Aorta (tissue), 5 donors: ENCODE measurements at regions of chr20 and their contacts with region 1.

Region 1: GRCh38 chr20:25623736-25624499 is at the start of gene NANP:
- DNase-seq: peak; percentile 98
- ATAC-seq: peak; percentile 97
- H3K4me3 ChIP-seq: peak within 1 kb of the TSS; percentile 81 to 82
- H3K27ac ChIP-seq: peak within 1 kb of the TSS in 1 of 2 donors; percentile 68
- H3K4me1 ChIP-seq: no peaks in the 10 kb centered on the region
- H3K27me3 ChIP-seq: no peaks in the 10 kb centered on the region
- total RNA-seq, gene NANP: 5.0 to 5.6 TPM

Region 2: DNA sequence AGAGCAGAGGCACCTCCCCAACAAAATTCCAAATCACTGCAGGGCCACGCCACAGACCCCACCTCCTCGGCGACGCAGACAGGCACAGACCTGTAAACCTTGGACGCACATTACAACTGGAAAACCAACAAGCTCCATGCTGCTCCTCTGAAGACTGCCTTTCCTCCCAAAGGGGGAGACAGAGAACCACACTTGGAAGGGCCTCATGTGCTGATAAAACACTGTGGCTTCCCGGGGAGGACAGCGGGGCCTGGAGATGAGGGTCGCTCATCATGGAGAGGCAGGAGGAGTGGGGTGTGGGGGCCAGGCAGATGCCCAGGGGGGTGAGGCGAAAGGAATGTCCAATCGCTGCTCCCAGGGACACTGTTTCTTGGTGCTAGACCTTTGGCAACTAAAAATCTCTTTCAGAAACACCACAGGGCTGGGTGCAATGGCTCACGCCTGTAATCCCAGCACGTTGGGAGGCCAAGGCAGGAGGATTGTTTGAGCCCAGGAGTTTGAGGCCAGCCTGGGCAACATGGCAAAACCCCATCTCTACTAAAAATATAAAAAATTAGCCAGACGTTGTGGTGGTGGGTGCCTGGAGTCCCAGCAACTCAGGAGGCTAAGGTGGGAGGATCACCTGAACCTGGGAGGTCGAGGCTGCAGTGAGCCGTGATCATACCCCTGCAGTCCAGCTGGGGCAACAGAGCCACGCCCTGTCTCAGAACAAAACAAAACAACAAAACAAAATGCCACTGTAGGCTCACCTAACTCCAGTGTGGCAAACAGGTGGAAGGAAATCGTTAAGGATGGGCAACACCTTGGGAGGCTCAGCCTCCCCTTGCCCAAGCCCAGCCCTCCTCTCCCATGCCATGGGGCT is 287.1 kb before region 1 on chr20:
- intact Hi-C with region 1: no loop called
- DNase-seq: no peak
- ATAC-seq: no peak
- H3K4me3 ChIP-seq: no peak overlapping the region
- H3K27ac ChIP-seq: no peak overlapping the region
- H3K4me1 ChIP-seq: no peaks in the 10 kb centered on the region
- H3K27me3 ChIP-seq: no peaks in the 10 kb centered on the region

Region 3: DNA sequence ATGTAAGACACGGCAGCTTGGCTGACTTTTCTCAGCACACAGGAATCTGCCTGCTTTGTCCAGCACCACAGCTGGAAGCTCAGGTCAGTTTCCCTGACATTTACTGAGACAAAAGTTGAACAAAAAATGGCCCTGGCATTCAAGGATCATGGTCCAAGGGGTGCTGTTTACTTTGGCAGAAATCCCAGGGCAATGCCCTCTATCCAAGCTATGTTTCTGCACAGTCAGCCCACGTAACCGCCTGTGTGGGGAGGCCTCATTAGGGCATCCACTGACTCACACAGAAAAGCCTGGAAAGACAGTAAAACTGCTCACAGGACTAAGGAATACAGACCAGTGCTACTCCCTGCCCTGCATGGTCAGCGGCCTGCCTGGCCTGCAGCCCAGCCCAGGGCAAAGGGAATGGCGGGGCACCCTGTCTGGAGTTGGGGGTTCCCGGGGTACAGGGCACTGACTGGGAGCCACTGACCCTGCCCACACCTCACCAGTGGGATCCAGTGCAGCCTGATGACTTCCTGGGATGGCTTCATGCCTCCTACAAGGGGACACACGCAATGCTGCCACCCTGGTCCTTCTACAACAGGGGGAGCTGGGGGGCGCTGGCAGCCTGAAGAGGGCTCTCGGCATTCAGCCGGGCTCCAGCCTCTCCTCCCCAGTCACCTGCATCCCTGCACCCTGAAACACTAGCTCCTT is 115.7 kb before region 1 on chr20:
- intact Hi-C with region 1: loop called in 1 of 2 experiments (anchors 5 kb)
- DNase-seq: peak in 1 of 2 donors; percentile 80
- ATAC-seq: peak; percentile 75
- H3K4me3 ChIP-seq: no peak overlapping the region
- H3K27ac ChIP-seq: peak overlapping the region in 1 of 2 donors; percentile 23
- H3K4me1 ChIP-seq: no peaks in the 10 kb centered on the region
- H3K27me3 ChIP-seq: no peaks in the 10 kb centered on the region

Region 4: DNA sequence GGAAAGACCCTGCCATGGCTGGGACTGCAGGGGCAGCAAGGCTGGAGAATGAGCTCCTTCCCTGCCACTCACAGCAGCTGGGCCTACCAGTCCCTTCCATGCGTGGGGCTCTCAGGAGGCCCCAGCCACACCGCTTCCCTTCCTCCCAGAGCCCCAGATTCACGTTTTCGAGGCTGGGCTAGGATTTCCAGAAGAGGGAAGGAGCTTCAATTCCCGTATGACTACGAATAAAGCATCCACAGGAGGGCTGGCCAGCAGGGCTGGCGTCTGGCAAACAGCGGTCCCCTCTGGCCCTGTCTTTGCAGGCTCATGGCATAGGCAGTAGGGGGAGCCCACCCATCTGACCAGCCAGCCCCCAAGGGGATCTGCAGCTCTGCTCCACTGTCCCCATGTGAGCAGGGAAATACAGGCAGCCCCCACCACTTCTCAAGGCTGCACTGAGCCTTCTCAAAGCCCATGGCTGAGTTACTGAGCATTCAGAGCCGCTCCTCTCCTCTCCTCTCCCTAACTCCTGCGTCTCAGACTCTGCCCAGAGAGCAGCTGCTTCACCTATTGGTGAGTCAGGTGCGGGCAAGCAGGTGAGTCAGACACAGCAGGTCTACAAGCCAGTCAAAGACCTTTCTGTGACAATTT is 91.7 kb before region 1 on chr20:
- intact Hi-C with region 1: loop called in 1 of 2 experiments (anchors 5 kb)
- DNase-seq: peak in 1 of 2 donors; percentile 61
- ATAC-seq: peak; percentile 80
- H3K4me3 ChIP-seq: peak overlapping the region; percentile 8 to 44
- H3K27ac ChIP-seq: peak overlapping the region; percentile 89 to 91
- H3K4me1 ChIP-seq: peaks cover 0 to 4% of the 10 kb centered on the region in 2 donors
- H3K27me3 ChIP-seq: no peaks in the 10 kb centered on the region

Region 5: GRCh38 chr20:25584905-25585704 is 38.8 kb before region 1 on chr20 and contains the start of gene NINL:
- intact Hi-C with region 1: loop called in 1 of 2 experiments (anchors 5 kb)
- DNase-seq: peak; percentile 74 to 90
- ATAC-seq: peak; percentile 88
- H3K4me3 ChIP-seq: peak within 1 kb of the TSS; percentile 62 to 71
- H3K27ac ChIP-seq: no peak within 1 kb of the TSS
- H3K4me1 ChIP-seq: no peaks in the 10 kb centered on the region
- H3K27me3 ChIP-seq: no peaks in the 10 kb centered on the region
- total RNA-seq, gene NINL: 9.1 to 16.7 TPM

Region 6: DNA sequence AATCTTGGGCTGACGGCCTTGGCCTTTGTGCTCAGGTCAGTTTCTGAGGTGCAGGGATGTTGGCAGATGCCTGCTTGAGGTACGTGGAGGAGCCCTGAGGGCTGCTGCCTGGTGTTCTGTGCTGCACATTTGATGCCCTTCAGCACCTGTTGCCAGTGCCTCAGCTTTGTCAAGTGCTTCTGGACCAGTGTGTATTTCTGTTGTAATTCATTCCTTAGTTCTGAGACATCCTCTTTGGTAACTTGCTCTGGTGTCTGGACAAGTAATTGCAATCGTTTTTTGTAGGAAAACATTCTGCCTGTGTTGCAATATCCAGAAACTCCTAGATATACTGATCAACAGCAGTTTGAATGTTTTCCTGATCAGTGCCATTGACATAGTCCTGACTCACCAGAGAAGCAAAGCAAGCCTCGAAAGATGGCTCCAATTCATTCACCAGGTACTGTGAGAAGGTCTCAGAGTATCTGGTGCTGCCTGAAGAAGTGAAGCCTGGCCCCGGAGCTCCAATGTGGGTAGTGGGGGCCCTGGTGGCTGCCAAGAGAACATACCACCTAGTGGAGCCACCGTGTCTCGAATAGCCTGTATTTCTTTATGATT is 46.0 kb after region 1 on chr20:
- intact Hi-C with region 1: loop called in 1 of 2 experiments (anchors 10 kb)
- DNase-seq: no peak
- ATAC-seq: no peak
- H3K4me3 ChIP-seq: no peak overlapping the region
- H3K27ac ChIP-seq: no peak overlapping the region
- H3K4me1 ChIP-seq: no peaks in the 10 kb centered on the region
- H3K27me3 ChIP-seq: no peaks in the 10 kb centered on the region

Region 7: GRCh38 chr20:25696384-25697131 is 72.6 kb after region 1 on chr20 and contains the start of gene ZNF337:
- intact Hi-C with region 1: loop called in 1 of 2 experiments (anchors 5 kb)
- DNase-seq: peak; percentile 98 to 99
- ATAC-seq: peak; percentile 100
- H3K4me3 ChIP-seq: peak within 1 kb of the TSS; percentile 72 to 73
- H3K27ac ChIP-seq: peak within 1 kb of the TSS; percentile 29 to 73
- H3K4me1 ChIP-seq: peaks cover 0 to 4% of the 10 kb centered on the region in 2 donors
- H3K27me3 ChIP-seq: no peaks in the 10 kb centered on the region
- total RNA-seq, gene ZNF337: 15.0 to 22.8 TPM

Region 8: GRCh38 chr20:25865380-25866118 is 241.6 kb after region 1 on chr20:
- intact Hi-C with region 1: no loop called
- DNase-seq: peak; percentile 85 to 94
- ATAC-seq: peak; percentile 61
- H3K4me3 ChIP-seq: no peak overlapping the region
- H3K27ac ChIP-seq: no peak overlapping the region
- H3K4me1 ChIP-seq: no peaks in the 10 kb centered on the region
- H3K27me3 ChIP-seq: no peaks in the 10 kb centered on the region